Right ventricle myocardium inferior (tissue), 1 donor: ENCODE measurements at regions of chr3 and their contacts with region 1.

Region 1: DNA sequence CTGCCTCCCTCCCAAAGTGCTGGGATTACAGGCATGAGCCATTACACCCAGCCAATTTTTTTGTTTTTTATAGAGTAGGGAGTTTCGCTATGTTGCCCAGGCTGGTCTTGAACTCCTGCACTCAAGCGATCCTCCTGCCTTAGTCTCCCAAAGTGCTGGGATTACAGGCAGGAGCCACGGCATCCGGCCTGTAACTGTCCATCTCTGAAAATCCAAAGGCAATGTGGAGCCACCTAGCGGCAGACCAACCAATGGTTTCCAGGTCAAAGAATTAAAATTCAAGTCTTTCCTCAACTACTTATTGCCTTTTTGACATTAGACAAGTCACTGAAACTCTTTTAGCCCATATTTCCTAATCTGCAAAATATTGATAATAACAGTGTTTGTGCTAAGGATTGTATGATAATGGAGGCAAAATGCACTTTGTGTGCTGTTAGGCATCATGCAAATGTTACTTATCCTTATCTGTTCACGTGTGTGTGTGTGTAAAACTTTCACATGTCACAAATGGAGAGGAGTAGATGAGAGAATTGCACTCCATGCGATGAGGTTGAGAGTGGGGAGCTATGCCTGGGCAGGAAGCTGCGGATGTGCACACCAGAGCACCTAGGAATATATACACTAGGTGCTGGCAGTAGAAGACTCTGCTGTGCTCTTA is 48.7 kb downstream of the COL8A1 start:
- DNase-seq: peak; percentile 63
- ATAC-seq: no peak

Region 2: GRCh38 chr3:99544786-99545281 is 142.2 kb before region 1 on chr3:
- intact Hi-C with region 1: loop called (anchors 10 kb)
- DNase-seq: peak; percentile 42
- ATAC-seq: peak; percentile 35

Region 3: GRCh38 chr3:99645277-99646106 is 41.6 kb before region 1 on chr3:
- intact Hi-C with region 1: loop called (anchors 5 kb)
- DNase-seq: no peak
- ATAC-seq: peak; percentile 3